ENCODE measurements at regions of chr2 and their contacts with region 1.

Region 1: GRCh38 chr2:197499594-197500526 is at the starts of genes HSPD1 and HSPE1:
- DNase-seq: peak; percentile 100
- H3K4me3 ChIP-seq: peak within 1 kb of the TSS; percentile 56 to 97 (median 90)
- H3K27ac ChIP-seq: peak within 1 kb of the TSS; percentile 75 to 93
- H3K4me1 ChIP-seq: peaks cover 15 to 48% (median 31%) of the 10 kb centered on the region in 4 experiments
- H3K27me3 ChIP-seq: no peaks in the 10 kb centered on the region

Region 2: DNA sequence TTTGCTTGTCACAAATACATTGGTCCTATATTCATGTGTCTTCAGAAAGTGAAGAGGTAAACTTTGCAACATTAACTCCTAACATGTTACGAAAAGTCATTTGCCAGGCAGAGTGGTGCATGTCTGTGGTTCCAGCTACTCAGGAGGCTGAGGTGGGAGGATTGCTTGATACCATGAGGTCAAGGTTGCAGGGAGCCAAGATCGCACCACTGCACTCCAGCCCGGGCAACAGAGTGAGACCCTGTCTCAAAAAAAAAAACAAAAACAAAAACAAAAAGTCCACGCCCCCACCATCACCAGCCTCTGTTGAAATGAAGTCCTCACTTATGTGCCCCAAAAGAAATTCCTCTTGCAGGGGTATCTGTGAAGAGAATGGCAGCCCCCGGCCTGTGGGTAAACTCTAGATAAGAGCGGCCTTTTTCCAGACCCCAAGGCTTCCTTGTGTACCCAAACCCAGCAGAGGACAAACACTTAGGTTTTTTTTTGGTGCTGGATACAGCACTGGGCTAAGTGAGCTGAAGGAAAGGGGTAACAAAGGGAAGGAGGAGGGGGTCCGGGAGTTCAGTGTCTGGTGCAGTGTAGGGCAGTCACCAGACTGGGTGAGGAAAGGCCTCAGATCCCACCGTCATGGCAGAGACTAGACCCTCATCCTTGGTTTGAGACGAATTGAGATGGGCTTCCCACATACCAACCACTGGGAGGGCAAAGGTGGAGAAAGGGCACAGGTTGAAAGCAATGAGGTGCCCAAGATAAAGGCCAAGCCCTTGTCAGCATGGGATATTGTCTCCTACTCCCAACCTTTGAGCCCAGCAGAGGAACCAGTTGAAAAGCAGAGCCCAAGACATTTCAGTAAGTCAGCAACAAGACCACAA is 19.5 kb before region 1 on chr2:
- CTCF ChIA-PET with region 1: no interaction called
- POLR2A ChIA-PET with region 1: no interaction called
- DNase-seq: no peak
- H3K4me3 ChIP-seq: no peak overlapping the region
- H3K27ac ChIP-seq: no peak overlapping the region
- H3K4me1 ChIP-seq: peaks cover 0 to 12% (median 1%) of the 10 kb centered on the region in 4 experiments
- H3K27me3 ChIP-seq: no peaks in the 10 kb centered on the region

Region 3: GRCh38 chr2:197515739-197516392 is 16.0 kb after region 1 on chr2 and contains the start of gene MOB4:
- CTCF ChIA-PET with region 1: interaction called, 8 read pairs
- POLR2A ChIA-PET with region 1: interaction called, 34 read pairs
- DNase-seq: peak; percentile 95 to 98 (median 98)
- H3K4me3 ChIP-seq: peak within 1 kb of the TSS; percentile 90 to 98 (median 92)
- H3K27ac ChIP-seq: peak within 1 kb of the TSS; percentile 80 to 95
- H3K4me1 ChIP-seq: peaks cover 10 to 24% (median 20%) of the 10 kb centered on the region in 4 experiments
- H3K27me3 ChIP-seq: no peaks in the 10 kb centered on the region